Panc1 (cell line): ENCODE measurements at regions of chr15 and their contacts with region 1.

Region 1: GRCh38 chr15:99014803-99015676 is 7.4 kb upstream of the PGPEP1L start:
- DNase-seq: no peak
- ATAC-seq: peak; percentile 92
- H3K4me3 ChIP-seq: peak overlapping the region; percentile 64 to 65
- H3K27ac ChIP-seq: peak overlapping the region; percentile 81
- H3K4me1 ChIP-seq: peaks cover 13% of the 10 kb centered on the region
- H3K27me3 ChIP-seq: no peaks in the 10 kb centered on the region
- CTCF ChIP-seq: no peak

Region 2: DNA sequence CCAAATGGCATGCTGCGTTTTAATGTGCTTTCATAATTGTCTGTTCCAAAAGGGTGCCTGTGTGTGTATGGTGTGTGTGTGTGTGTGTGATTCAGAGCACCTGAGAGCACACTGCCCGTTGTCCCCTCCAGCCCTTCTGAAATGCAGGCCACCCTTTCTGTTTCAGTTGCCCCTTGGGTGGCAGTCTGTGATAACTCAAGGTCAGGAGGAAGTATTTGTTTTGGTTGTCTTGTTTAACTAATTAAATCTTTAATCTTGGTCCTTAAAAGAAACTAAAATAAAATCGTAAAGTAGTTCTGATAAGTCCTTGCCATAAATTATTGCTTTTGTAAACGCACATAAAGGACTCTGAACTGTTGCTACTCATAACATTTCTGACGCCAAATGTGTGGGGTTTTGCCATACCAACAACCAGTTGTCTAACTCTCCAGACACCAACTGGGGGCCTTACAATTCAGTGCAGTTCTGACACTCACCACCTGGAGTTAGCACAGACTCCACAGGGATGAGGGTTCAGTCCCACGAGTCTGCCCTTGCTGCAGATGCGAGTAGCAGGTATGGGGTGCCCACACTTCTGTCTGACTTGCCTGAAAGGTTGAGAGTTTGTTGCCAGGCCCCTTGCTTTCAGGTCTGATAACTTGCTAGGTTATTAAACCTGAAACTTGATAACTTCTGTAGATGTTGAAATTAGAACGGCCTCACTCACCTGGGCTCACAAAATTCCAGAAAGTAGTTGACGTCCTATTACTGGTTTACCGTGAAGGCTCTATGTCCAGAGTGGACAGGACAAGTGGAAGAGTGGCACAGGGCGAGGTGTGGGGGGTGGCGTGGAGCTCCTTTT is 209.4 kb before region 1 on chr15:
- CTCF ChIA-PET with region 1: no interaction called
- POLR2A ChIA-PET with region 1: interaction called, 11 read pairs
- in situ Hi-C with region 1: no loop called
- intact Hi-C with region 1: no loop called
- DNase-seq: no peak
- ATAC-seq: peak; percentile 65
- H3K4me3 ChIP-seq: no peak overlapping the region
- H3K27ac ChIP-seq: peak overlapping the region; percentile 69
- H3K4me1 ChIP-seq: peaks cover 71% of the 10 kb centered on the region
- H3K27me3 ChIP-seq: no peaks in the 10 kb centered on the region
- CTCF ChIP-seq: peak; percentile 52

Region 3: GRCh38 chr15:98850961-98851573 is 164.0 kb before region 1 on chr15:
- CTCF ChIA-PET with region 1: no interaction called
- POLR2A ChIA-PET with region 1: interaction called, 15 read pairs
- in situ Hi-C with region 1: no loop called
- intact Hi-C with region 1: no loop called
- DNase-seq: no peak
- ATAC-seq: peak; percentile 82
- H3K4me3 ChIP-seq: peak overlapping the region in 1 of 2 experiments; percentile 90; a peak in 2 of 4 replicates
- H3K27ac ChIP-seq: peak overlapping the region; percentile 86
- H3K4me1 ChIP-seq: peaks cover 74% of the 10 kb centered on the region
- H3K27me3 ChIP-seq: no peaks in the 10 kb centered on the region
- CTCF ChIP-seq: peak; percentile 91

Region 4: GRCh38 chr15:98937413-98938104 is 77.5 kb before region 1 on chr15:
- CTCF ChIA-PET with region 1: no interaction called
- POLR2A ChIA-PET with region 1: no interaction called
- in situ Hi-C with region 1: no loop called
- intact Hi-C with region 1: no loop called
- DNase-seq: no peak
- ATAC-seq: no peak
- H3K4me3 ChIP-seq: no peak overlapping the region
- H3K27ac ChIP-seq: no peak overlapping the region
- H3K4me1 ChIP-seq: no peaks in the 10 kb centered on the region
- H3K27me3 ChIP-seq: no peaks in the 10 kb centered on the region
- CTCF ChIP-seq: no peak

Region 5: GRCh38 chr15:98981851-98982722 is 33.0 kb before region 1 on chr15:
- CTCF ChIA-PET with region 1: no interaction called
- POLR2A ChIA-PET with region 1: interaction called, 13 read pairs
- in situ Hi-C with region 1: no loop called
- intact Hi-C with region 1: no loop called
- DNase-seq: no peak
- ATAC-seq: peak; percentile 32
- H3K4me3 ChIP-seq: no peak overlapping the region
- H3K27ac ChIP-seq: no peak overlapping the region
- H3K4me1 ChIP-seq: 0 out of 2 replicates have a peak, but pooled peaks cover 7% of the 10 kb centered on the region
- H3K27me3 ChIP-seq: no peaks in the 10 kb centered on the region
- CTCF ChIP-seq: no peak

Region 6: DNA sequence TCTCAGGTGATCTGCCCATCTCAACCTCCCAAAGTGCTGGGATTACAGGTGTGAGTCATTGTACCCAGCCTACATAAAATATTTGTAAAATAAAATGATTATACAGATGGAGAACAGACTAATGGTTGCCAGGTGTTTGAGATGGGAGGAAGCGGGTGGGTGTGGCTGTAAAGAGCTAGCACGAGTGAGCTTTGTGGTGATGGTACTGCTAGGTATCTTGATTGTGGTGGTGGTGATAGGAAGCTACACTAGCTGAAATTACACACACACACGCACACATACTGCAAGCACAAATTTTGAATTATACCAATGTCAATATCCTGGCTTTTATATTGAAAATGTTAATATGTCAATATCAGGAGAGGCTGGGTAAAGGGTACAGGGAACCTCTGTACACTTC is 12.8 kb before region 1 on chr15:
- CTCF ChIA-PET with region 1: interaction called, 11 read pairs
- POLR2A ChIA-PET with region 1: interaction called, 11 read pairs
- in situ Hi-C with region 1: no loop called
- intact Hi-C with region 1: no loop called
- DNase-seq: no peak
- ATAC-seq: no peak
- H3K4me3 ChIP-seq: no peak overlapping the region
- H3K27ac ChIP-seq: no peak overlapping the region
- H3K4me1 ChIP-seq: no peaks in the 10 kb centered on the region
- H3K27me3 ChIP-seq: no peaks in the 10 kb centered on the region
- CTCF ChIP-seq: no peak

Region 7: GRCh38 chr15:99030839-99031238 is 15.8 kb after region 1 on chr15:
- CTCF ChIA-PET with region 1: no interaction called
- POLR2A ChIA-PET with region 1: interaction called, 16 read pairs
- in situ Hi-C with region 1: no loop called
- intact Hi-C with region 1: no loop called
- DNase-seq: no peak
- ATAC-seq: no peak
- H3K4me3 ChIP-seq: no peak overlapping the region
- H3K27ac ChIP-seq: no peak overlapping the region
- H3K4me1 ChIP-seq: no peaks in the 10 kb centered on the region
- H3K27me3 ChIP-seq: no peaks in the 10 kb centered on the region
- CTCF ChIP-seq: no peak

Region 8: DNA sequence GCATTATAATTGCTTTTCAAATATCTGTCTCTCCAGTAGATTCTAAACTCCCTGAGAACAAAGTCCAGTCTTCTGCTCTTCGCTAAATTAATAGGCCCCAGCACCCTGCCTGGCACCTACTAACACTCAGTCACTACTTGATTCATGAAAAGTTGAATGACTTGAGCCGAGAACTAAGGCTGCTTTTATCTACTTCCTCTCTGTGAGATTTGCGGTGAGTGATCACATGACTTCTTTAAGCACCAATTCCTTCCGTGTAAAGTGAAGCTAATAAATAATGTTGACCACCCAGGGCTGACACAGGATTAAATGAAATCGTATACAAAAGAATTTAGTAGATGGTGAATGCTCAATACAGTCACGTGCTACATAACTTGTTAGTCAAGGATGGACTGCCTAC is 37.2 kb after region 1 on chr15:
- CTCF ChIA-PET with region 1: no interaction called
- POLR2A ChIA-PET with region 1: interaction called, 11 read pairs
- in situ Hi-C with region 1: no loop called
- intact Hi-C with region 1: no loop called
- DNase-seq: no peak
- ATAC-seq: no peak
- H3K4me3 ChIP-seq: no peak overlapping the region
- H3K27ac ChIP-seq: no peak overlapping the region
- H3K4me1 ChIP-seq: peaks cover 4% of the 10 kb centered on the region; the same call in 1 of the 2 replicates
- H3K27me3 ChIP-seq: no peaks in the 10 kb centered on the region
- CTCF ChIP-seq: no peak